ENCODE measurements at regions of chr4 and their contacts with region 1.

Region 1: GRCh38 chr4:169604131-169604900 is 8.1 kb downstream of the NEK1 start:
- DNase-seq: no peak
- H3K4me3 Mint-ChIP-seq: no peak overlapping the region
- H3K27ac Mint-ChIP-seq: peak overlapping the region; percentile 51
- H3K4me1 Mint-ChIP-seq: peaks cover 42% of the 10 kb centered on the region
- H3K27me3 Mint-ChIP-seq: no peaks in the 10 kb centered on the region

Region 2: DNA sequence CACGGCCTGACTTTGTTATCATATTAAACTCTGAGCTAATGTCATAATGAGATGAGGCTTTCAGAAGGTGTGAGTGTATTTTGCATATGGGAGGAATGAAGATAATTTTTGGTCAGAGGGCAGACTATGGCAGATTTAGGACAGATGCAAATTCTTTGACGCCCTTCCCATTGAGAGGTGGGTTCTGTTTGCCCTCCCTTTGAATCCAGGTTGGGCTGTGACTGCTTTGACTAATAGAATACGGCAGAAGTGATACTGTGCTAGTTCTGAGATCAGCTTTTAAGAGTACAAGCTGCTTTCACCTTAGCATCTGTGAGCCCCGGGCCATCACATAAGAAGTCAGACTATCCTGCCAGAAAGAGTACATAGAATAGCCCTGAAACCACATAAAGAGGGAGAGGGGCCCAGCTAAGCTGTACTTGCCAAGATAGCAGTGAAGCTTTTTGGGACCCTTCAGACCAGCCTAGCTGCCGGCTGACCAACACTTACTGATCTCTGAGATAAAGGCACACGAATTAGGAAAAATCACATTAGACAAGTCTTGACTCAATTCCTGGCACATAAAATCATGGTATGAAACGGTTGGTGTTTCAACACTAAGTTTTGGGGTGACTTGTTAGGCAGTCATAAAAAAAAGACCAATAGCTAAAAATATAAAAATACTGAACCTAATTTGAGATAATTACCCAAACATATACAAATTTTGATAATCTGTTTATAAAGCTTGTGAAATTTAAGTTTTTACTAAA is 166.8 kb before region 1 on chr4:
- intact Hi-C with region 1: no loop called
- DNase-seq: no peak
- H3K4me3 Mint-ChIP-seq: no peak overlapping the region
- H3K27ac Mint-ChIP-seq: no peak overlapping the region
- H3K4me1 Mint-ChIP-seq: no peaks in the 10 kb centered on the region
- H3K27me3 Mint-ChIP-seq: no peaks in the 10 kb centered on the region

Region 3: GRCh38 chr4:169464080-169464479 is 140.2 kb before region 1 on chr4:
- intact Hi-C with region 1: no loop called
- DNase-seq: no peak
- H3K4me3 Mint-ChIP-seq: no peak overlapping the region
- H3K27ac Mint-ChIP-seq: no peak overlapping the region
- H3K4me1 Mint-ChIP-seq: no peaks in the 10 kb centered on the region
- H3K27me3 Mint-ChIP-seq: peaks cover 2% of the 10 kb centered on the region

Region 4: DNA sequence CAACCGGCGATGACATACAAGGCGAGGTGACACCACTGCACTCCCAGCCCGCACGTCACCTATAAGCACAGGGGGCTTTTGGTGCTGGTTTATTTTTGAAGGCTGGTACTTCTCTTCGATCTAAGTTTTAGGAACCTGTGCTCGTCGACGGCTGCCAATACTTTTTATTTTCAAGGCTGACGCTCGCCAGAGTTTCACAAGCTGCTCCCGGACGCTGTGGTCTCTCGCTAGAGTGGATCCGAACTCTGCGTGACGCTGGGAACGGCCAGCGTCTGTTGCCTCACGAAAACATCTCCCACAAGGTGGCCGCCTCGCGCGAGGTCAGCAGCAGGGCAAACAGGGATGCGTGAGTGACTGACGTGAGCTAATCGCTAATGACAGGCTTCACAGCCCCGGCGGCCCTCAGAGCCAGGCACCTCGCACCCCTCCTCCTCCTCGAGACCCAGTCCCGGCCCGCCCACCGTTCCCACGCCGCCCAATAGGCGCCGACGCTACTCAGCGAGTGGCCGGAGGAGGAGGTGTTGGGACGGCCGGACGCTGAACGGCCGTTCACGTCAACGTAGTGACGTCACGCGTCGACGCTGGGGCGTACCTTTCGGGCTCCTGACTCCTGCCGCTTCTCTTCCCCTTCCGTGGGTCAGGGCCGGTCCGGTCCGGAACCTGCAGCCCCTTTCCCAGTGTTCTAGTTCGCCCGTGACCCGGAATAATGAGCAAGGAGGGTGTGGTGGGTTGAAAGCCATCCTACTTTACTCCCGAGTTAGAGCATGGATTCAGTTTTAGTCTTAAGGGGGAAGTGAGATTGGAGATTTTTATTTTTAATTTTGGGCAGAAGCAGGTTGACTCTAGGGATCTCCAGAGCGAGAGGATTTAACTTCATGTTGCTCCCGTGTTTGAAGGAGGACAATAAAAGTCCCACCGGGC is 15.9 kb after region 1 on chr4 and contains the start of gene CLCN3:
- intact Hi-C with region 1: loop called (anchors 2 kb)
- DNase-seq: peak; percentile 85
- H3K4me3 Mint-ChIP-seq: peak within 1 kb of the TSS; percentile 99
- H3K27ac Mint-ChIP-seq: peak within 1 kb of the TSS; percentile 99
- H3K4me1 Mint-ChIP-seq: peaks cover 62% of the 10 kb centered on the region
- H3K27me3 Mint-ChIP-seq: no peaks in the 10 kb centered on the region
- total RNA-seq, gene CLCN3: 23.8 and 25.6 TPM in 2 replicates

Measured in activated T-helper 2 cell treated with anti-CD3 and anti-CD28 coated beads, Interferon-gamma antibody, Interleukin-2, Interleukin-4, amounts not matched to agents 10 μg/mL and 5 μg/mL and 100 μg/mL, durations not matched to agents 14 hours and 24 hours and 36 hours (primary cell).